CD4-positive, alpha-beta T cell (primary cell): ENCODE measurements at regions of chr12 and their contacts with region 1.

Region 1: DNA sequence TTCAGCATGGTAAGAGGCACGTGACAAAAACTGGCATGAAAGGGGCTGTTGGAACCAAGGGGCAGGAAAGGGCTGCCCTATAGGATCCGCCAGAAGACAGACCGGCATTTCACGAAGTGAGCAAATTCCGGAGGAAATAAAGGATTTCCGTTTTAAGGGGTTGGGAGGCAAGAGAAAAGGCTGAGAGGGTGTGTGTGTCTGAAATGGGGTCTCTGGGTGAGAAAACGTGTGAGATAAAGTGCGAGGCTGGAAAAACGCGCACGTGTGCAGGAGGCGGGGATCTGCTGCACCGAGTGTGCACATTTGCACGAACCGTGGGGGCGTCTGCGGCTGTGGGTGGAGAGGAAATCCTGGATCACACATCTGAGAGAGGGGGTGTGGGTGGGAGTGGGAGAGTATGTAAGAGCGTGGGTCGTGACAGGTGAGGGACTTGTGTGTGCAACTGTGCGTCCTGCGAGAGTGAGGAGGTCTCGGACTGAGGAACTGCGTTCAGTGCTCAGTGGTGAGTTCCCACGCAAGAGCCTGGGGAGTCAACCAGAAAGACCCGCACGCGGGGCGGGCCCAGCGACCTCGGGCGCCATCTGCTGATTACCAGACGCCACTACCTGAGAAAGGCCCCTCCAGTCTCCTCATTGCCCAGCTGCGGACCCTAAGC is 37.0 kb upstream of the P2RX7 start:
- DNase-seq: peak; percentile 60 to 87 (median 72)
- ATAC-seq: peak; percentile 72
- H3K4me3 ChIP-seq: peak overlapping the region; percentile 42
- H3K4me3 Mint-ChIP-seq: peak overlapping the region; percentile 76
- H3K27ac ChIP-seq: no peak overlapping the region
- H3K27ac Mint-ChIP-seq: no peak overlapping the region
- H3K4me1 ChIP-seq: peaks cover 36% of the 10 kb centered on the region
- H3K4me1 Mint-ChIP-seq: peaks cover 54% of the 10 kb centered on the region
- H3K27me3 ChIP-seq: peaks cover 0 to 3% of the 10 kb centered on the region in 2 experiments
- H3K27me3 Mint-ChIP-seq: no peaks in the 10 kb centered on the region
- CTCF ChIP-seq: peak; percentile 89

Region 2: GRCh38 chr12:120944645-120945231 is 150.9 kb before region 1 on chr12:
- CTCF ChIA-PET with region 1: interaction called, 3 read pairs
- POLR2A ChIA-PET with region 1: no interaction called
- intact Hi-C with region 1: loop called in 1 of 2 experiments (anchors 5 kb)
- DNase-seq: peak; percentile 32 to 80 (median 58)
- ATAC-seq: peak; percentile 71
- H3K4me3 ChIP-seq: no peak overlapping the region
- H3K4me3 Mint-ChIP-seq: no peak overlapping the region
- H3K27ac ChIP-seq: no peak overlapping the region
- H3K27ac Mint-ChIP-seq: no peak overlapping the region
- H3K4me1 ChIP-seq: no peaks in the 10 kb centered on the region
- H3K4me1 Mint-ChIP-seq: peaks cover 5% of the 10 kb centered on the region
- H3K27me3 ChIP-seq: no peaks in the 10 kb centered on the region
- H3K27me3 Mint-ChIP-seq: peaks cover under 1% of the 10 kb centered on the region
- CTCF ChIP-seq: peak; percentile 68

Region 3: GRCh38 chr12:121110211-121110940 is 14.7 kb after region 1 on chr12:
- CTCF ChIA-PET with region 1: no interaction called
- POLR2A ChIA-PET with region 1: no interaction called
- intact Hi-C with region 1: no loop called
- DNase-seq: peak; percentile 33 to 87 (median 58)
- ATAC-seq: peak; percentile 82
- H3K4me3 ChIP-seq: no peak overlapping the region
- H3K4me3 Mint-ChIP-seq: no peak overlapping the region
- H3K27ac ChIP-seq: no peak overlapping the region
- H3K27ac Mint-ChIP-seq: no peak overlapping the region
- H3K4me1 ChIP-seq: no peaks in the 10 kb centered on the region
- H3K4me1 Mint-ChIP-seq: no peaks in the 10 kb centered on the region
- H3K27me3 ChIP-seq: no peaks in the 10 kb centered on the region
- H3K27me3 Mint-ChIP-seq: no peaks in the 10 kb centered on the region
- CTCF ChIP-seq: peak; percentile 99